ENCODE measurements at regions of chr4 and their contacts with region 1.

Region 1: DNA sequence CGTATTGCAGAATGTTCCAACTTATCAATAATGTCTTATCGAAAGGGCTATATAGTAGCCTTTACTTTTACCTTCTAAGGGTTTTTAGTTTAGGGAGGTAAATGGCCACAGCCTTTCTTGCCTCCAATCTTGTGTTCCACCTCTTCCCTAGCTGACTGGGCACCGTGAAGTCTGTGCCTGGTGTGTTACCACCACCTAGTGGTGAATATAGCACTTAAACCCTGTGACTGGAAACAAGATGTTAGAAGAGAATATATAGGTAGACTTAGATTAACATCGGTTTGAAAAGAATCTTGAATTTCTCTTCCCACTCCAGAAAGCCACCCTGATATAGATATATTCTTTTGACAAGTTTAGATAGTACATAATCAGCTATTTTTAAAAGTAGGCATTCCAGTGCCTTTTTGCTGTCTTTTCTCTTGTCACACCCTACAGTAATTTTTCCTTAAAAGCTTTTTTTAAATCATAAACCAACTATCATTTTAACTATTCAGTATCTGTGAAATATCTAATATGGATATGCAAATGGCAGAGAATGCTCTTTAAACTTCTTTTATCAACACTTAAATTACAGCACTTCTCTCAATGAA is 27.8 kb upstream of the ADH7 start:
- DNase-seq: peak; percentile 82
- H3K4me3 Mint-ChIP-seq: no peak overlapping the region
- H3K27ac Mint-ChIP-seq: no peak overlapping the region
- H3K4me1 Mint-ChIP-seq: no peaks in the 10 kb centered on the region
- H3K27me3 Mint-ChIP-seq: peaks cover 22% of the 10 kb centered on the region

Region 2: GRCh38 chr4:99117876-99118693 is 344.9 kb before region 1 on chr4:
- intact Hi-C with region 1: loop called (anchors 1 kb)
- DNase-seq: no peak
- H3K4me3 Mint-ChIP-seq: no peak overlapping the region
- H3K27ac Mint-ChIP-seq: no peak overlapping the region
- H3K4me1 Mint-ChIP-seq: no peaks in the 10 kb centered on the region
- H3K27me3 Mint-ChIP-seq: peaks cover 14% of the 10 kb centered on the region

Region 3: GRCh38 chr4:99563310-99564186 is 100.6 kb after region 1 on chr4 and contains the start of gene TRMT10A:
- intact Hi-C with region 1: no loop called
- DNase-seq: peak; percentile 97
- H3K4me3 Mint-ChIP-seq: peak within 1 kb of the TSS; percentile 97
- H3K27ac Mint-ChIP-seq: peak within 1 kb of the TSS; percentile 99
- H3K4me1 Mint-ChIP-seq: peaks cover 16% of the 10 kb centered on the region
- H3K27me3 Mint-ChIP-seq: peaks cover 13% of the 10 kb centered on the region
- total RNA-seq, gene TRMT10A: 7.4 and 8.6 TPM in 2 replicates

Region 4: GRCh38 chr4:99808260-99808857 is 345.4 kb after region 1 on chr4:
- intact Hi-C with region 1: loop called (anchors 10 kb)
- DNase-seq: peak; percentile 92
- H3K4me3 Mint-ChIP-seq: no peak overlapping the region
- H3K27ac Mint-ChIP-seq: no peak overlapping the region
- H3K4me1 Mint-ChIP-seq: peaks cover 16% of the 10 kb centered on the region
- H3K27me3 Mint-ChIP-seq: peaks cover 13% of the 10 kb centered on the region

Measured in activated CD4-positive, alpha-beta T cell treated with anti-CD3 and anti-CD28 coated beads, Interleukin-2, amount 10 ng/mL, durations not matched to agents 24 days and 14 days (primary cell).